Cardiac septum (tissue), 1 donor: ENCODE measurements at regions of chr18 and their contacts with region 1.

Region 1: GRCh38 chr18:31225668-31226067 is 63.0 kb upstream of the DSC1 start:
- DNase-seq: peak; percentile 81

Region 2: DNA sequence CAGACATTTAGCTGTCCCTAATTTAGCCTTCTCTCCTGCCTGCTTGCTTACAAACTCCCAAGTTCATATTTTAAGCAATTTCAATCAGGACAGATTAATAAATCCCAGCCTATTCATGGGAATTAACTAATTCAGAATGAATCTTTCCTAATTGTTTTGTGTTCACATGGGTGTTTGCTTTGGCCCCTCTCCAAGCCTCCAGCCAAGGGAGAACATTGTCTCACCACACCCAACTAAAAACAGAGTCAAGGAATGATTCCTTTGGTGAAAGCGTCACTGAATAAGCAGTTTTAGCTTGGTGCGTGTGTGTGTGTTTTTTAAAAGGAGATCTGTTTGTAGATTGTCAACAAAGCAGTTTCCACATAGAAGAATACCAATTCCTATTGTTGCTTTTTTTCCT is 49.2 kb after region 1 on chr18:
- intact Hi-C with region 1: loop called (anchors 10 kb)
- DNase-seq: no peak

Region 3: GRCh38 chr18:31497837-31498573 is 272.3 kb after region 1 on chr18 and contains the start of gene DSG2:
- intact Hi-C with region 1: loop called (anchors 10 kb)
- DNase-seq: peak; percentile 85
- total RNA-seq, gene DSG2: 34.4 TPM